ENCODE measurements at regions of chr13 and their contacts with region 1.

Region 1: DNA sequence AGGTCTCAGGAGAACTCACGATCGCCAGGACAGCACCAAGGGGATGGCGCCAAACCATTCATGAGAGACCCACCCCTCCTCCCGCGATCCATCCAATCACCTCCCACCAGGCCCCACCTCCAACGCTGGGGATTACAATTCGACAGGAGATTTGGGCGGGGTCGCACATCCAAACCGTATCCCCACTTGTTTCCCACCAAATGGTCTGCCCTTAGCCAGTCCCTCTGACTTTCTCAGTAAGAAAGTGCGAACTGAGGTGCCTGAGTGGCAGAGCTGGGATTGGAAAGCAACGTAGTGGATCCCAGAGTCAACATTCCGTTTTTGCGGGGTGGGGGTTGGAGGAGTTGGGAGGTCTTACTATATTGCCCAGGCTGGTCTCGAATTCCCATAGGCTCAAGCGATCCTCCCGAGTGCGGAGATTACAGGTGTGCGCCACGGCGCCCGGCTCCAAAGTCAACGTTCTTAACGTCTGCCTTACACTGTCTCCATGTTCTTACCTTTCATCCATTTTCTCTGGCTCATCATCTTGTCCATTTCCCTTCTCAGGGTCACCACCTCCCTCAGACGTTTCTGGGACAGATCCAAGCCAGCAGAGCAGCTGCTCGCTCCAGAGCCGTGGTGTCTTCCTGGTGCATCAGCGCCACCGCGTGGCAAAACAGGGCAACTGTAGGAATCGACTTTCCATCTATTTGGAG is 102.7 kb upstream of the ABCC4 start:
- DNase-seq: peak; percentile 48
- ATAC-seq: peak; percentile 95
- H3K4me3 ChIP-seq: peak overlapping the region; percentile 65
- H3K27ac ChIP-seq: peak overlapping the region; percentile 36; the same call in 1 of the 2 replicates
- H3K4me1 ChIP-seq: peaks cover 7% of the 10 kb centered on the region; the same call in 1 of the 2 replicates
- H3K27me3 ChIP-seq: no peaks in the 10 kb centered on the region
- CTCF ChIP-seq: peak; percentile 91 to 97 (median 93); a peak in 5 of 6 replicates
- EP300 ChIP-seq: no peak
- POLR2A ChIP-seq: no peak
- RAD21 ChIP-seq: peak; percentile 100

Region 2: GRCh38 chr13:94674609-94675348 is 729.2 kb before region 1 on chr13:
- CTCF ChIA-PET with region 1: interaction called, 42 read pairs
- POLR2A ChIA-PET with region 1: no interaction called
- RAD21 ChIA-PET with region 1: interaction called, 36 read pairs
- SMC1A ChIA-PET with region 1: interaction called, 16 read pairs
- in situ Hi-C with region 1: loop called (anchors 10 kb)
- intact Hi-C with region 1: loop called (anchors 1 kb)
- DNase-seq: no peak
- ATAC-seq: peak; percentile 83
- H3K4me3 ChIP-seq: no peak overlapping the region
- H3K27ac ChIP-seq: no peak overlapping the region
- H3K4me1 ChIP-seq: no peaks in the 10 kb centered on the region
- H3K27me3 ChIP-seq: no peaks in the 10 kb centered on the region; a peak in 2 of 4 replicates
- CTCF ChIP-seq: peak; percentile 73 to 80 (median 73)
- EP300 ChIP-seq: no peak
- POLR2A ChIP-seq: no peak
- RAD21 ChIP-seq: peak; percentile 68

Region 3: GRCh38 chr13:95156208-95156607 is 247.8 kb before region 1 on chr13:
- CTCF ChIA-PET with region 1: interaction called, 14 read pairs
- POLR2A ChIA-PET with region 1: no interaction called
- RAD21 ChIA-PET with region 1: interaction called, 4 read pairs
- SMC1A ChIA-PET with region 1: interaction called, 5 read pairs
- in situ Hi-C with region 1: no loop called
- intact Hi-C with region 1: no loop called
- DNase-seq: no peak
- ATAC-seq: no peak
- H3K4me3 ChIP-seq: no peak overlapping the region
- H3K27ac ChIP-seq: no peak overlapping the region
- H3K4me1 ChIP-seq: no peaks in the 10 kb centered on the region
- H3K27me3 ChIP-seq: no peaks in the 10 kb centered on the region
- CTCF ChIP-seq: peak in 1 of 3 experiments; percentile 32; a peak in 1 of 6 replicates
- EP300 ChIP-seq: no peak
- POLR2A ChIP-seq: no peak
- RAD21 ChIP-seq: peak; percentile 28; the same call in 1 of the 2 replicates

Region 4: DNA sequence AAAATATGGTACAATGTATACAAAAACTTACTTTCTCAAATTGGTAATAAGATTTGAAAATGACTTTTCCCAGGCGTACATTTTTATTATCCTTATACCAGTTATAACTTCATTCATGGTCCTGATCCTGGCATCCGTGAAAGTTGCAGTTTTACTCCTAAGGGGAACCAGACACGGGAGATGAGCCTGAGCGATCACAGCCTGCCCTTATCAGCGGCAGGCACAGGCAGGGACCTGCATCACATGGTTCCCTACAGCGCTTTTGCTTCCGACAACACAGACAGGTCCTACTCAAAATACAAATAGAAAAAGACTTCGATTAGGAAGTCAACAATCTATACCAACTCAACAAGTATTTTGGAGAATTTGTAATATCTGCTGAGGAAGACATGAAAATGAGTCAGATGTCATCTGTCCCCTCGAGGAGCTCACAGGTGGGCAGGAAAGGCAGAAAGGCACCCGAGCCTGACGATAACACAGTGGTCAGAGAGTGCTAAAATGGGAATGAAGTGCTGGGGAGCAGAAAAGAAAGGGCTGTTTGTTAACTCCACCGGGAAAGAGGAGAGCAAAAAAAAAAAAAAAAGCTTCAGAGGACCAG is 196.1 kb before region 1 on chr13:
- CTCF ChIA-PET with region 1: interaction called, 4 read pairs
- POLR2A ChIA-PET with region 1: no interaction called
- RAD21 ChIA-PET with region 1: interaction called, 10 read pairs
- SMC1A ChIA-PET with region 1: interaction called, 4 read pairs
- in situ Hi-C with region 1: no loop called
- intact Hi-C with region 1: no loop called
- DNase-seq: no peak
- ATAC-seq: peak; percentile 95
- H3K4me3 ChIP-seq: peak overlapping the region; percentile 58; the same call in 1 of the 2 replicates
- H3K27ac ChIP-seq: peak overlapping the region; percentile 59
- H3K4me1 ChIP-seq: peaks cover 8% of the 10 kb centered on the region
- H3K27me3 ChIP-seq: no peaks in the 10 kb centered on the region
- CTCF ChIP-seq: no peak
- EP300 ChIP-seq: no peak
- POLR2A ChIP-seq: no peak
- RAD21 ChIP-seq: no peak

Region 5: GRCh38 chr13:95378603-95379002 is 25.4 kb before region 1 on chr13:
- CTCF ChIA-PET with region 1: interaction called, 132 read pairs
- POLR2A ChIA-PET with region 1: no interaction called
- RAD21 ChIA-PET with region 1: interaction called, 106 read pairs
- SMC1A ChIA-PET with region 1: interaction called, 122 read pairs
- in situ Hi-C with region 1: no loop called
- intact Hi-C with region 1: no loop called
- DNase-seq: no peak
- ATAC-seq: no peak
- H3K4me3 ChIP-seq: no peak overlapping the region
- H3K27ac ChIP-seq: no peak overlapping the region
- H3K4me1 ChIP-seq: peaks cover 16% of the 10 kb centered on the region
- H3K27me3 ChIP-seq: no peaks in the 10 kb centered on the region
- CTCF ChIP-seq: no peak
- EP300 ChIP-seq: no peak
- POLR2A ChIP-seq: no peak
- RAD21 ChIP-seq: no peak

Region 6: GRCh38 chr13:95474992-95475391 is 71.0 kb after region 1 on chr13:
- CTCF ChIA-PET with region 1: interaction called, 39 read pairs
- POLR2A ChIA-PET with region 1: no interaction called
- RAD21 ChIA-PET with region 1: interaction called, 32 read pairs
- SMC1A ChIA-PET with region 1: interaction called, 21 read pairs
- in situ Hi-C with region 1: no loop called
- intact Hi-C with region 1: loop called (anchors 1 kb)
- DNase-seq: no peak
- ATAC-seq: no peak
- H3K4me3 ChIP-seq: no peak overlapping the region
- H3K27ac ChIP-seq: no peak overlapping the region
- H3K4me1 ChIP-seq: peaks cover 15% of the 10 kb centered on the region
- H3K27me3 ChIP-seq: no peaks in the 10 kb centered on the region
- CTCF ChIP-seq: no peak
- EP300 ChIP-seq: no peak
- POLR2A ChIP-seq: no peak
- RAD21 ChIP-seq: no peak

Measured in GM12878 (cell line).